ENCODE measurements at regions of chr18 and their contacts with region 1.

Region 1: GRCh38 chr18:63317982-63318881 is 1.3 kb downstream of the BCL2 start:
- DNase-seq: peak; percentile 55 to 88 (median 75)
- ATAC-seq: peak; percentile 46 to 56 (median 48)
- H3K4me3 ChIP-seq: peak overlapping the region; percentile 95 to 96
- H3K4me3 Mint-ChIP-seq: peak overlapping the region; percentile 99 to 100 (median 99)
- H3K27ac ChIP-seq: peak overlapping the region; percentile 57
- H3K27ac Mint-ChIP-seq: peak overlapping the region; percentile 97
- H3K4me1 ChIP-seq: peaks cover 30 to 41% of the 10 kb centered on the region in 2 experiments
- H3K4me1 Mint-ChIP-seq: peaks cover 60 to 69% (median 67%) of the 10 kb centered on the region in 3 donors
- H3K27me3 ChIP-seq: no peaks in the 10 kb centered on the region
- H3K27me3 Mint-ChIP-seq: no peaks in the 10 kb centered on the region

Region 2: DNA sequence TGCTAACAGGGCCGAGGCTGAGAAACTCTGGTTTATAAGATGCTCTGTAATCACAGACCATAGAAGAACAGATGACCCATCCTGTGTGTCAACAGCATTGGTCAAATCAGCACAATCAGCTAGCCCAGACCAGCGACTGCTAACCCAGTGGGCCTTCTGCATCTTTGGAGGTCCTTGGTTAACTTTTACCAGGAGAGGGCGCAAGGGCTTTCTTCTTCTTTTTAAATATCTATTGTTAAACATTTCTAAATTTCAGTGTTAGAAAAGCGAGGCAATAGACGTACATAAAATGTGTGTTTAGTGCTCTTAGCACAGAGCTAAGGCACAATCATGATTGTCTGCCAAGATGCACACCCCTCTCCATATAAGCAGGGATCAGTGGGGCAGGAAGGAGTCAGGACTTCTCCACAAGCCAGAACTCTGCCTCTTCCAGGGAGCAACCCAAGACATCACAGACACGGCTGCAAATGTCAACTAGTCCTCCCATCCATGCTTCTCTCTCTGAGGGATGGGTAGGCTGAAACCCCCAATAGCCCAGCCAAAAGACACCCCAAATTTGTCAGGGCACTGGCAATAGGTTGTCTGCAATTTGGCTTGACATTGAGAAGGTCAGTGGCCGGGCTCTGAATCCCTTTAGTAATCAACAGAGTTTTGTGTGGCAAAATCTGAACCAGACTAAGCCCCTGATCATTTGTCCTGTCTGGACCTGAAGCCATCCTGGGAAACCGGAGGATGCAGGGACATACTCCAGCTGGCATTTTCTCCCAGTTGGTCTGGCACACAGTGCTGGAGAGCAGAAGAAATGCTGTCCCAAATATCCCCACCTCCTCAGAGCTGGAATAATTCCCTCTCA is 186.9 kb before region 1 on chr18:
- CTCF ChIA-PET with region 1: interaction called, 13 to 28 read pairs
- POLR2A ChIA-PET with region 1: interaction called, 3 to 9 read pairs
- DNase-seq: peak in 34 of 35 experiments; percentile 23 to 79 (median 52)
- ATAC-seq: peak; percentile 49 to 72 (median 66)
- H3K4me3 ChIP-seq: no peak overlapping the region
- H3K4me3 Mint-ChIP-seq: peak overlapping the region in 2 of 3 donors; percentile 31 to 46
- H3K27ac ChIP-seq: peak overlapping the region; percentile 39
- H3K27ac Mint-ChIP-seq: peak overlapping the region; percentile 87 to 92
- H3K4me1 ChIP-seq: peaks cover 14 to 23% of the 10 kb centered on the region in 2 experiments
- H3K4me1 Mint-ChIP-seq: peaks cover 43 to 62% (median 47%) of the 10 kb centered on the region in 3 donors
- H3K27me3 ChIP-seq: no peaks in the 10 kb centered on the region
- H3K27me3 Mint-ChIP-seq: no peaks in the 10 kb centered on the region

Region 3: DNA sequence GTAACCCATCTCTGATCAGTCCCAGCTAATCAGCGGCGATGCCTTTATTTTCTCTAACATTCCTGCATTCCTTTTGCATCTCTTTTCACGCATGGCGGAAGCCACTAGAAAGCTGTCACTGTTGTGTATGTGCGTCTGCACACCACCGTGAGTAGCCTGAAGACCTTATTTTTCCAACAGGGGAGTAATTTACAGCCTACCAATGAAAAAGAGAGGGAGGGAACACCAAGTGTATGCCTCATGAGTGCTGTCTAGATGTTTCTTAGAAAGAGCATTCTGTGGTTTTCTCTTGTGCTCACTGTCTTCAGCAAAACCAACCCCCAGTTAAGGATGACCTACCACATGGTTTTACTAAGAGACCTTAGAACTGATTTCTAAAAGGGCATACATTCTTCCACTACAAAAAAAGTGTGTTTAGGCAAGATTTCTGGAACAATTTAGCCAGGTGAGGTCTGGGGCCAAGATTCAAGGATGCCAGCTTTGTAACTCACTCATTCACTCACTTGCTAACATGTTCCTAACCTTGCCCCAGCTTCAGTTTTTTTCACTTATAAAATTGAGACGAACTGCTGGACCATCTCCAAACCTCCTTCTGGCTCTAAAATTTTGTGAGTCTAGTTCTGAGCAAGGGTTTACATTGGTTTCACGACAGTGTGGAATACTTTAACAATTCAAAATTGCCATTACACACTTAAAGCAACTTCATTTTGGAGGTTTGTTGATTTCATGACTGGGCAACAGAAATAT is 50.1 kb before region 1 on chr18:
- CTCF ChIA-PET with region 1: interaction called, 3 to 12 read pairs
- POLR2A ChIA-PET with region 1: no interaction called
- DNase-seq: no peak
- ATAC-seq: peak; percentile 56 to 83 (median 79)
- H3K4me3 ChIP-seq: no peak overlapping the region
- H3K4me3 Mint-ChIP-seq: peak overlapping the region in 2 of 3 donors; percentile 29 to 70
- H3K27ac ChIP-seq: peak overlapping the region; percentile 19
- H3K27ac Mint-ChIP-seq: peak overlapping the region; percentile 42 to 81
- H3K4me1 ChIP-seq: peaks cover 21 to 26% of the 10 kb centered on the region in 2 experiments
- H3K4me1 Mint-ChIP-seq: peaks cover 76 to 95% (median 81%) of the 10 kb centered on the region in 3 donors
- H3K27me3 ChIP-seq: no peaks in the 10 kb centered on the region
- H3K27me3 Mint-ChIP-seq: no peaks in the 10 kb centered on the region

Region 4: DNA sequence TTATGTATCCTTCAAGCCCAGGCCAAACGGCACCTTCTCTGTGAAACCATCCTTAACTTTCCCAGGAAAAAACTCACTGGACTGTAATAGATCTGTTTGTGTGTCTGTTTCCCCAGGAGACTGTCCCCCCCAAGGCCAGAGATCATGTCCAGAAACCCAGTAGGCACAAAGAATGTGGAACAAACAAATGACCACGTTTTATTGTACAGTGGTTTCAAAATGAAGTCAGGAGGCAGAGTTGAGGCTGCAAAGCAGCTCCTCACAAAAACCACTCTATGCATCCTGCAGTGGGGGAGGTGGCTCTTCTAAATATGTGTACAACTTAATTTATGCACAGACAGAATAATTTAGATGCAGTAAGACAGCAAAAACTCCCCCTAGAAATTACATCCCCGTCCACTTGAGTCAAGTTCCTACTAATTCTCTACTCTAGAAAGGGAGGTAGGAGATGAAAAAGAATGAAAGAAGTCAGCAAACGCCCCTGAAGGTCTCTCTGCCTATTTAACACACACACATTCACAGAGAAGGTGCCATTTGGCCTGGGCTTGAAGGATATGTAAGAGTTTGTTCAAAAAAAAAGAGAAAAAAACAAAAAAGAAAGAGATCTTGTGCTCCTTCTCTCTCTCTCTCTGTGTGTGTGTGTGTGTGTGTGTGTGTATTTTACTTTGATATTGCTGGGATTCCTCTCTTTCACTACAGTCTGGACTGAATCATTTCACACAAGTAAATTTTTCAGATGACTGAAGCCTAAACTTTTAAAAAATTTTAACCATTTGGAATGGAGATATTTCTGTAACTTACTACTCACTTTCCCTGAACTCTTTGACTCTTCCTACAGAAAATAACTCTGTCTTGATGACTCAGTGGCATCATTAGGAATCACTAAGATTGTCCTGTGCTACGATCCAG is 18.1 kb before region 1 on chr18:
- CTCF ChIA-PET with region 1: interaction called, 4 to 13 read pairs
- POLR2A ChIA-PET with region 1: interaction called in 1 of 2 experiments, 3 read pairs
- DNase-seq: peak in 17 of 35 experiments; percentile 15 to 44 (median 25)
- ATAC-seq: peak in 3 of 4 experiments; percentile 54 to 72 (median 63)
- H3K4me3 ChIP-seq: no peak overlapping the region
- H3K4me3 Mint-ChIP-seq: peak overlapping the region; percentile 57 to 60 (median 58)
- H3K27ac ChIP-seq: peak overlapping the region; percentile 67
- H3K27ac Mint-ChIP-seq: peak overlapping the region; percentile 94 to 97
- H3K4me1 ChIP-seq: peaks cover 31 to 53% of the 10 kb centered on the region in 2 experiments
- H3K4me1 Mint-ChIP-seq: peaks cover 79 to 86% (median 80%) of the 10 kb centered on the region in 3 donors
- H3K27me3 ChIP-seq: no peaks in the 10 kb centered on the region
- H3K27me3 Mint-ChIP-seq: no peaks in the 10 kb centered on the region

Region 5: GRCh38 chr18:63430526-63430925 is 112.3 kb after region 1 on chr18:
- CTCF ChIA-PET with region 1: no interaction called
- POLR2A ChIA-PET with region 1: no interaction called
- DNase-seq: no peak
- ATAC-seq: no peak
- H3K4me3 ChIP-seq: no peak overlapping the region
- H3K4me3 Mint-ChIP-seq: no peak overlapping the region
- H3K27ac ChIP-seq: no peak overlapping the region
- H3K27ac Mint-ChIP-seq: no peak overlapping the region
- H3K4me1 ChIP-seq: no peaks in the 10 kb centered on the region
- H3K4me1 Mint-ChIP-seq: no peaks in the 10 kb centered on the region
- H3K27me3 ChIP-seq: peaks cover 0 to 12% of the 10 kb centered on the region in 2 experiments
- H3K27me3 Mint-ChIP-seq: peaks cover 26% of the 10 kb centered on the region in 2 donors